Adrenal gland (tissue), 19 donors: ENCODE measurements at regions of chr12 and their contacts with region 1.

Region 1: GRCh38 chr12:5432011-5432400 is at the start of gene NTF3:
- DNase-seq: no peak
- H3K4me3 ChIP-seq: peak within 1 kb of the TSS in 1 of 4 donors; percentile 49
- H3K27ac ChIP-seq: no peak within 1 kb of the TSS
- H3K4me1 ChIP-seq: peaks cover 0 to 11% of the 10 kb centered on the region in 2 donors
- H3K27me3 ChIP-seq: peaks cover 26% of the 10 kb centered on the region
- CTCF ChIP-seq: no peak
- POLR2A ChIP-seq: no peak
- total RNA-seq, gene NTF3: 0.28 to 1.4 (median 0.69) TPM in 7 of 9 donors, not detected in the others

Region 2: DNA sequence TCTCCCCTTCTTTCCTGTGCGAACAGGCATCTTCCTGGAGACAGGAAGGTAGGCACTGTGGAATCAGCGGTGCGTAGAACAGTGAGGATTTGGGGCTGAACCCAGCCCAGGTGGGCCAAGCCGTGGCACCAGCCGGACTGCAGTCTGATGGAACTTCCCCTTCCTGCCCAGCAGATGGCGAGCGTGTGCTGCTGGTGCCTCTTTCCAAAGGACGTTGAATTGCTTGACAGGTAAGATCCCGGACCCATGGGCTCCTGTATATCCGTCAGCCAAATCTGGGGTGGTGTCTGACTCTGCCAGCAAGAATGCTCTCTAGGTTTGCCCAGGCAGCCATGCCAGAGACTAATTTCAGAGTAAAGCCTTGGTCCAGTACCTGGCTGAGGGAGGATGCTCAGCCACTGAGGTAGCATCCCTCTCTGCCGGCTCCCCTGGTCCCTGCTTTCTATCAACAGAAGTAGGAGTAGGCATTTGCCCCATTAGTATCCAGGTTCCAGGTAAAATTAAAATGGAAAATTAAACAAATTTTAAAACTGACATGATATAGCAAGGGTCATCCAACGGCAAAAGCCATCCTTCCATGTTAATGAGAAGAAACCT is 409.4 kb before region 1 on chr12:
- intact Hi-C with region 1: loop called in 1 of 2 experiments (anchors 10 kb)
- DNase-seq: peak; percentile 18 to 59 (median 28)
- H3K4me3 ChIP-seq: no peak overlapping the region
- H3K27ac ChIP-seq: no peak overlapping the region
- H3K4me1 ChIP-seq: no peaks in the 10 kb centered on the region
- H3K27me3 ChIP-seq: peaks cover 5% of the 10 kb centered on the region
- CTCF ChIP-seq: peak; percentile 50 to 85 (median 78)
- POLR2A ChIP-seq: no peak